PC-3 (cell line): ENCODE measurements at regions of chr19 and their contacts with region 1.

Region 1: GRCh38 chr19:38245826-38246498 is 10.2 kb downstream of the PPP1R14A start:
- DNase-seq: no peak
- ATAC-seq: no peak
- H3K4me3 ChIP-seq: no peak overlapping the region
- H3K27ac ChIP-seq: no peak overlapping the region
- H3K4me1 ChIP-seq: peaks cover 4% of the 10 kb centered on the region; the same call in 1 of the 2 replicates
- H3K27me3 ChIP-seq: no peaks in the 10 kb centered on the region
- CTCF ChIP-seq: no peak

Region 2: GRCh38 chr19:38134540-38135149 is 111.3 kb before region 1 on chr19:
- CTCF ChIA-PET with region 1: no interaction called
- POLR2A ChIA-PET with region 1: no interaction called
- intact Hi-C with region 1: no loop called
- DNase-seq: peak; percentile 36
- ATAC-seq: no peak
- H3K4me3 ChIP-seq: no peak overlapping the region
- H3K27ac ChIP-seq: no peak overlapping the region
- H3K4me1 ChIP-seq: no peaks in the 10 kb centered on the region
- H3K27me3 ChIP-seq: no peaks in the 10 kb centered on the region
- CTCF ChIP-seq: peak; percentile 63

Region 3: DNA sequence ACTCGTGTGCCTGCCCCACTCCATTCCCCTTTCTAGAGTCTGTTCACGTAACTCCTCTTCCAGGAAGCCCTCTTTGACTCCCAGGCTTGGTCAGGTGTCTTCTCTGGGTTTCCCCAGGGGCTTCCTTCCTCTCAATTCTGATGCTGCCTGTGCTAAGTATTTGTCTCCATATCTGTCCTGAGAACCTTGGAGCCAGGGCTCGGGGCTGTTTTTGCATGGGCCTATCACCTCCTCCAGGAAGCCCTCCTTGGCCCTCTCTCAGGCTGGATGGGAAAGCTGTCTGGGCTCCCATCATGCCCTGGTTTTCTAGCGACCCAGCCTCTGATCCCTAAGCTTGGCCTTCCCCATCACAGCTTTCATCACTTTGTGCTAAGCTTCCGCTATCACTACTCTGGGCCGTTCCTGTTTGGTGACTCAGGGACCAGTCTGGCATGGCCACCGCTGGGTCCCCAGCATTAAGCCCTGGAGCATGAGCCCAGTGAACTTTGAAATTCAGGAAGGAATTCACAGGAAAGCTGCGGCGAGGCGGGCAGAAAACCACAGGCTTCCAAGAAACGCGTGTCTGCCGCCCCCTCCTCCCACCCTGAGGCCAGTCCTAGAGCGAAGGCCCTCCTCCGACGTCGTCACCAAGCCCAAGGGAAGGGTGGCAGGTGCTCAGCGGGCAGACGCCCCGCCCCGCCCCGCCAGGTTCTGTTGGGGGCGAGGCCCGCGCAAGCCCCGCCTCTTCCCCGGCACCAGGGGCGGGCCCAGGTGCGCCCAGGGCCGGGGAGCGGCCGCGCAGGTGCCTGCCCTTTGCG is 17.9 kb after region 1 on chr19:
- CTCF ChIA-PET with region 1: no interaction called
- POLR2A ChIA-PET with region 1: no interaction called
- intact Hi-C with region 1: no loop called
- DNase-seq: peak; percentile 90
- ATAC-seq: peak; percentile 58
- H3K4me3 ChIP-seq: peak overlapping the region; percentile 91
- H3K27ac ChIP-seq: peak overlapping the region; percentile 73
- H3K4me1 ChIP-seq: peaks cover 39% of the 10 kb centered on the region
- H3K27me3 ChIP-seq: no peaks in the 10 kb centered on the region
- CTCF ChIP-seq: no peak

Region 4: DNA sequence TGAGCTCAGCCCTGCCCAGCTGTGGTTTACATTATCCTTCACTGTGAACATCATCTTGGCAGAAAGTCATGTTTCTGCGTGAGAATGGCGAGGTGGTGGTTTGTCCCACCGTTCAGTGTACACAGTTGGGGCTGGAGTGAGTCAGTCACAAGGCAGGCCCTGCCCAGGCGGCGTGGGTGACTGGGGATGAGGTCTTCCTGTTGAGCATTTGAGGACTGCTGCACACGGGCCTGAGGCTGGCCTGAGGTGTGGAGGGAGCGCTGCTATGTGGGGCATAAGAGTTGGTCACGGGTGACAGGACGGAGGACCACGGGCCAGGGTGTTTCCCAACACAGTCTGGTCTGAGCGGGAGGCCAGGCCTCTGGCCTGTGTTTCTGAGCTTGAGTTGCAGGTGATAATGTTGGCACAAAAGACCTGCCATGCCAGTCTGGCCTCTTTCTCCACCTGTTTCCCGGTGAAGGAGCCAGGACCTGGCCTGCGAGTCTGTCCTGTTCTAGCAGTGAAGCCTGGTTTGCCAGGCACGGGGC is 44.7 kb after region 1 on chr19:
- CTCF ChIA-PET with region 1: no interaction called
- POLR2A ChIA-PET with region 1: no interaction called
- intact Hi-C with region 1: loop called (anchors 10 kb)
- DNase-seq: peak; percentile 97
- ATAC-seq: peak; percentile 95
- H3K4me3 ChIP-seq: no peak overlapping the region
- H3K27ac ChIP-seq: peak overlapping the region; percentile 93
- H3K4me1 ChIP-seq: peaks cover 34% of the 10 kb centered on the region
- H3K27me3 ChIP-seq: no peaks in the 10 kb centered on the region
- CTCF ChIP-seq: no peak

Region 5: DNA sequence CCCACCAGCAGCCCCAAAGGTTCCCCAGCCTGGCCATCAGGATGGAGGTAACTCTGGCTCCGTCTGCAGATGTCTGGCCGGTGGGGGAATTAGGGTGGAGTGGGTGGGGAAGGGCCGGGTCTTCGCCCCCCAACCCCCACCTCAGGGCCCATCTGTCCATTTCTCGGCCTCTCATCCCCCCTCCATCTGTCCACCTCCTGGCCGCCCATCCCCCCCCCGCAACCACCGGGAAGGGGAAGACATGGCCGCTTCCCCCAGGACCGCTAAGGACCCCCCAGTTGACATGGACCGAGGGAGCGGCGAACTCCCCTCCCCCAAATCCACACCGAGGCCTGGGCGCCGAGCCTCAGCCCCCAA is 1073.9 kb after region 1 on chr19:
- CTCF ChIA-PET with region 1: no interaction called
- POLR2A ChIA-PET with region 1: no interaction called
- intact Hi-C with region 1: no loop called
- DNase-seq: no peak
- ATAC-seq: no peak
- H3K4me3 ChIP-seq: peak overlapping the region; percentile 82
- H3K27ac ChIP-seq: no peak overlapping the region
- H3K4me1 ChIP-seq: 0 out of 2 replicates have a peak, but pooled peaks cover 4% of the 10 kb centered on the region
- H3K27me3 ChIP-seq: no peaks in the 10 kb centered on the region
- CTCF ChIP-seq: no peak